Esophagus squamous epithelium (tissue), 5 donors: ENCODE measurements at regions of chr14 and their contacts with region 1.

Region 1: GRCh38 chr14:105527661-105528581 is 1.5 kb downstream of the TMEM121 start:
- DNase-seq: no peak
- H3K4me3 ChIP-seq: peak overlapping the region; percentile 41 to 81 (median 54)
- H3K27ac ChIP-seq: peak overlapping the region; percentile 18 to 83 (median 62)
- H3K4me1 ChIP-seq: peaks cover 19 to 40% (median 27%) of the 10 kb centered on the region in 3 donors
- H3K27me3 ChIP-seq: peaks cover 0 to 55% (median 9%) of the 10 kb centered on the region in 4 donors
- CTCF ChIP-seq: peak; percentile 58 to 91 (median 85)
- POLR2A ChIP-seq: peak in 1 of 4 donors; percentile 44

Region 2: GRCh38 chr14:105034314-105035039 is 493.4 kb before region 1 on chr14:
- intact Hi-C with region 1: no loop called
- DNase-seq: no peak
- H3K4me3 ChIP-seq: no peak overlapping the region
- H3K27ac ChIP-seq: peak overlapping the region; percentile 21 to 89 (median 66)
- H3K4me1 ChIP-seq: peaks cover 0 to 23% (median 9%) of the 10 kb centered on the region in 3 donors
- H3K27me3 ChIP-seq: peaks cover 0 to 11% (median 0%) of the 10 kb centered on the region in 4 donors
- CTCF ChIP-seq: no peak
- POLR2A ChIP-seq: no peak

Region 3: DNA sequence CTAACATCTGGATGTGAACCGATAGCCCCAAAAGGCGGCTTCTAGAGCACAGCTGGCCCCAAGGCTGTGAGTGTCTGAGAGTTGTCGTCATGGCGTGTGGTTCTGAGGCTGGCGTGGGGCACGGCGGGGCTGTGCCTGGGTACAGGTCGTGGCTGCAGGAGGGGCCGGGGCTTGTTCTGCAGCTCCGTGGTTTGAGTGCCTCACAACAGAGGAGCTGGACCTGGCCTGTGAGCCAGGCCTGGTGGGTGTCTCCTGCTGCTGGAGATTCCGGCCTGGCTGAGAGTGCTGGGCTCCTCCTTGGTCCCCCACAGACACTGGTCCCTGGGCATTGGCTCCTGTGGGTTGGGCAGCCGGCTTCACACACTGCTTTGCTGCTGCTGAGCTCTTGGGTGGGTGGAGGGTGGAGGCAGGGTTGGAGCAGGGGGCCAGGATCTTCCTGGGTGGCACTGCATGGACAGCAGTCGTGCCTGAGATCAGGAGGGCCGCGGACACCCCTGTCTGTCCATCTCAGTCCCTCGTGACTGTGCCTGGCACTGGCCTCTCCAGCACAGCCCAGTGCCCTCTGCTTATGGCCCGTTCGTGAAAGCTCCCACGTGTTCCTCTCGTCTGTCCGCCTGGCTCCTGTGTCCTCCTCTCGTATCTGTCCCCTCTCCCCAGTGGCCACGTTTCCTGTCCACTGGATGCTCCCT is 161.4 kb before region 1 on chr14:
- intact Hi-C with region 1: loop called (anchors 5 kb)
- DNase-seq: no peak
- H3K4me3 ChIP-seq: no peak overlapping the region
- H3K27ac ChIP-seq: no peak overlapping the region
- H3K4me1 ChIP-seq: peaks cover 0 to 18% (median 4%) of the 10 kb centered on the region in 3 donors
- H3K27me3 ChIP-seq: no peaks in the 10 kb centered on the region
- CTCF ChIP-seq: no peak
- POLR2A ChIP-seq: no peak

Region 4: GRCh38 chr14:105419195-105420091 is 108.5 kb before region 1 on chr14 and contains the start of gene MTA1:
- intact Hi-C with region 1: no loop called
- DNase-seq: no peak
- H3K4me3 ChIP-seq: peak within 1 kb of the TSS; percentile 63 to 89 (median 76)
- H3K27ac ChIP-seq: peak within 1 kb of the TSS; percentile 77 to 87 (median 83)
- H3K4me1 ChIP-seq: peaks cover 38 to 56% (median 42%) of the 10 kb centered on the region in 3 donors
- H3K27me3 ChIP-seq: peaks cover 0 to 2% (median 0%) of the 10 kb centered on the region in 4 donors
- CTCF ChIP-seq: no peak
- POLR2A ChIP-seq: no peak
- total RNA-seq, gene MTA1: 19.9 to 64.7 (median 39.6) TPM

Region 5: DNA sequence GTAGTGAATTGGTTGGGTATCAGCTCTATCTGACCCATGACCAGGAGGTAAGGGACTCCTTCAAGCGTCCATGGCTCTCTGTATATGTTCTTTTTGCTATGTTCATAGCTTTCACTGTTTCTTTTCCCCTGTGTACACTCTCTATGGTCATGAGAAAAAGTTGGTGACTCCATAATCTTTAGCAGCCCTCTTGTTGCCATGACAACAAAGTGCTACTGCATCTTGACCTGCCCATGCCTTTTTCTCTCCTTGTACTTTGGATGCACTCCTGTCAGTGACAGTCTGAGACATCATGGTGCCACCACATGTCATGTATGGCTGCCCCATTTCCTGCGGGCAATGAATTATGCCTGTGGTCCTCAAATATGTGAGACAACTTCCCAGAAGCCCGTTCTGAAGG is 278.6 kb after region 1 on chr14:
- intact Hi-C with region 1: no loop called
- DNase-seq: no peak
- H3K4me3 ChIP-seq: no peak overlapping the region
- H3K27ac ChIP-seq: no peak overlapping the region
- H3K4me1 ChIP-seq: no peaks in the 10 kb centered on the region
- H3K27me3 ChIP-seq: no peaks in the 10 kb centered on the region
- CTCF ChIP-seq: no peak
- POLR2A ChIP-seq: no peak